Right ventricle myocardium superior (tissue), 1 donor: ENCODE measurements at regions of chr1 and their contacts with region 1.

Region 1: DNA sequence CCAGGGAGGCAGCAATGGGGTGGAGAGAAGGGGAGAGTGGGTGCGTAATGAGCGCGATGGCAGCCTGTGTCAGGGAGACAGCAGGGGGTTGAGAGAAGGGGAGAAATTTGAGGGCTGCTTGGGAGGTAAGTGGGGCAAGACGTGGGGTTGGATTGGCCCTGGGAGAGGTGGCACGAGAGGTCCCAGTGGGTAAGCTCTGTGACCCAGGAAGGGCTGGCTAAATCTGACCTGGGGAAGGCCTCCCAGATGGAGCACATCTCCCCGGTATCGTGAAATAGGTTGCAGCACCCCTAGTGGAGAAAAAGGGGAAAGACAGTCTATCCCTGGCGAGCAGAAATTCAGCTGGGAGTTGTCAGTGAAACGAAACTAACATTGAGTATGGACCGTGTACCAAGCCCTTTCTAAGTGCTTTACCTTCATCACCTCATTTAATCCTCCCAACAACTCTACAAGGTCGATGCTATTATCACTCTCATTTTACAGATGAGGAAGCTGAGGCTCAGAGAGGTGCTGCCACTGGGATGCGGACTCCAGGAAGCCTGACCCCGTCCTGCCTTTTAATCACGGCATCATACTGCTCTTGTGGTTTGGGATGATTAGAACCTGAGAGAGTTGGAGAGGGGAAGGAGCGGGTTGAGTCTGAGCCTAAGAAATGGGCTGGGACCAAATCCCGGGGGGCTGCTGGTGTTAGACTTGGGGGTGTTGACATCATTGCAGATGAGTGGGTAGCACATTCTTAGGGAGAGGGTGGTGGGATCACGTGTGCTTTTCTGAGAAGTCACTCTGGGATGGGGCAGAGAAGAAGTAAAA is 56.6 kb upstream of the RPL11 start:
- DNase-seq: no peak
- ATAC-seq: peak; percentile 58

Region 2: DNA sequence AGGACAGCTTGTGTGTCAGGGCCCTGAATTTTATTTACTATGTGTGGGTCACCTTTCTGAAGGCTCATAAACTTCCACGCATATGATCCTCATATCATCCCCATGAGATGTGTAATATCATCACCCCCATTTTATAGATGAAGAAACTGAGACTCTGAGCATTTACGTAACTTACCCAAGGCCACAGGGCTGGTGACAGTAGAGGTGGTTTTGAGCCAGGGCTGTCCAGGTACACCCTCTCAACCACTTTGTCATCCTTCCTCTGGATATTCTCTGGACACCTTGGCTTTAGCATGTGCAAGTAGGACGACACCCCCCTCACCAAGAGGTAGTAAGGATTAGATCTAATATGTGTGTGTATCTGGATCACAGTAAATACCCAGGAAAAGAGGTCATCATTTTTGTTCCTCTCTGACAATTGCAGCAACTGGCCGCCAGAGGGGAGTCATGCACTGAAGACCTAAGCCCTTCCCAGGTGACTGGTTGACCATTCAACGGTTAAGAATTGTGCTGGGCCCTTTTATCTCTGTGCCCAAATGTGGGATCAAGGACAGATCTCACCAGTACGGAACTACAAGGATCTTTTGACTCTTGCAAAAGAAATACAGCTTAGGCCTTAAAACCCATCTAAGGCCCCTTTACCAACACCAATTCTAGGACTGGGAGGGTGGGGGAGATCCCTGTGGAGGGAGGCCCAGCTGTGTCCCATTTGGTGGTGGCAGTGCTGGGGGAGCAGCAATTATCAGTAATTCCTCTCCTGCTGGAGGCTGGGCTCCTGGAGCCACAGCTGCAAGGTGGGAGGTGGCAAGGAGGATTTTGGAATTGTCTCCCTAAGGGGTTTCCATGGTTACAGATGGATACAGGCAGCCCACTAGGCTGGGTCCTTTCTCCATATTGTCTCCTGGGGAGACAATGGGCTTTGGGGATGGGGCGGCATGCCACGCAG is 90.3 kb before region 1 on chr1:
- intact Hi-C with region 1: loop called (anchors 1 kb)
- DNase-seq: peak; percentile 84
- ATAC-seq: peak; percentile 80

Region 3: GRCh38 chr1:23562137-23562876 is 72.7 kb before region 1 on chr1:
- intact Hi-C with region 1: loop called (anchors 5 kb)
- DNase-seq: peak; percentile 98
- ATAC-seq: peak; percentile 85

Region 4: DNA sequence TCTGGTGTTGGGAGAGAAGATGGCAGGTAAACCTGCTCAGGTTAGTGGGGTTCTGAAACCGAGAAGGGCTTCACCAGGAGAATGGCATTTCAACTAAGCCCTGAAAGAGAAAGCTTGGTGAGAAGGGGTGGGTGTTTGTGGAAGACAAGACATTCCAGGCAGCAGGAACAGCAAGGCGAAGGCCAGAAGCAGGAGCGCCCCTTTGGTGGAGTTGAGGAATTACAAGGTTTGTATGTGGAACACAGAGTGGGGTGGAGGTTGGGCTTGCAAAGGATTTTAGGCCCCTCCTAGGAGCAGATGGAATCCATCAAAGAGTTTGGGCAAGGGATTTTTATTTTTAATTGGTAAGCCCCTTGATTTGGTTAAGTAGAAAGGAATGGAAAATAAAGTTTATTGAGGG is 83.4 kb after region 1 on chr1:
- intact Hi-C with region 1: no loop called
- DNase-seq: no peak
- ATAC-seq: no peak